OCI-LY7 (cell line): ENCODE measurements at regions of chr18 and their contacts with region 1.

Region 1: GRCh38 chr18:56257205-56257604 is 381.2 kb downstream of the TXNL1 start:
- DNase-seq: no peak
- H3K4me3 ChIP-seq: no peak overlapping the region
- H3K27ac ChIP-seq: no peak overlapping the region
- H3K4me1 ChIP-seq: no peaks in the 10 kb centered on the region
- CTCF ChIP-seq: no peak

Region 2: DNA sequence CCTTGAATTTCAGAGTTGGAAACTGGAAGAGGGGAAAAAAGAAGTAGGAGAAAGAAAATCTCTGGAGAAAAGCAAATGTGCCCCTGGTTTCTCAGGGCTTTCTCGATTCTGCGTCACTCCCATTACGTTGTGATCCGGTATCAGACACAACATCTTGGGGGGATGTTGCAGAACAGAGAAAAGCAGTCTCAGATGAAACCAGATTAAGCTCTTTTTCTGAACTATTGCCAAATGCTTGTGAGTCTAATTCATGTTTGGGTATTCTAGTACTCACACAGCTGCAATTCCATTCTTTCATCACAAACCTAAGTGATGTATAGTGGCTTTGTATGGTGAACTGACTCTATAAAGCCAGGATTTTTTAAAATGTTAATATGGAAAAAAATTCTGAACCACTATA is 902.4 kb before region 1 on chr18:
- CTCF ChIA-PET with region 1: no interaction called
- POLR2A ChIA-PET with region 1: no interaction called
- intact Hi-C with region 1: loop called (anchors 5 kb)
- DNase-seq: no peak
- H3K4me3 ChIP-seq: no peak overlapping the region
- H3K27ac ChIP-seq: no peak overlapping the region
- H3K4me1 ChIP-seq: no peaks in the 10 kb centered on the region
- CTCF ChIP-seq: no peak

Region 3: GRCh38 chr18:56188529-56189285 is 68.5 kb before region 1 on chr18:
- CTCF ChIA-PET with region 1: no interaction called
- POLR2A ChIA-PET with region 1: no interaction called
- intact Hi-C with region 1: no loop called
- DNase-seq: no peak
- H3K4me3 ChIP-seq: no peak overlapping the region
- H3K27ac ChIP-seq: no peak overlapping the region
- H3K4me1 ChIP-seq: no peaks in the 10 kb centered on the region
- CTCF ChIP-seq: no peak

Region 4: GRCh38 chr18:56298935-56299334 is 41.7 kb after region 1 on chr18:
- CTCF ChIA-PET with region 1: no interaction called
- POLR2A ChIA-PET with region 1: no interaction called
- intact Hi-C with region 1: no loop called
- DNase-seq: no peak
- H3K4me3 ChIP-seq: no peak overlapping the region
- H3K27ac ChIP-seq: no peak overlapping the region
- H3K4me1 ChIP-seq: peaks cover 7% of the 10 kb centered on the region
- CTCF ChIP-seq: no peak

Region 5: GRCh38 chr18:56337507-56337906 is 80.3 kb after region 1 on chr18:
- CTCF ChIA-PET with region 1: no interaction called
- POLR2A ChIA-PET with region 1: no interaction called
- intact Hi-C with region 1: no loop called
- DNase-seq: no peak
- H3K4me3 ChIP-seq: no peak overlapping the region
- H3K27ac ChIP-seq: no peak overlapping the region
- H3K4me1 ChIP-seq: no peaks in the 10 kb centered on the region
- CTCF ChIP-seq: no peak